ENCODE measurements at regions of chrX and their contacts with region 1.

Region 1: GRCh38 chrX:63746278-63746677 is 38.7 kb downstream of the ARHGEF9 start:
- DNase-seq: no peak
- ATAC-seq: no peak
- H3K4me3 ChIP-seq: no peak overlapping the region
- H3K27ac ChIP-seq: peak overlapping the region; percentile 3
- H3K4me1 ChIP-seq: peaks cover 15% of the 10 kb centered on the region
- H3K27me3 ChIP-seq: no peaks in the 10 kb centered on the region

Region 2: DNA sequence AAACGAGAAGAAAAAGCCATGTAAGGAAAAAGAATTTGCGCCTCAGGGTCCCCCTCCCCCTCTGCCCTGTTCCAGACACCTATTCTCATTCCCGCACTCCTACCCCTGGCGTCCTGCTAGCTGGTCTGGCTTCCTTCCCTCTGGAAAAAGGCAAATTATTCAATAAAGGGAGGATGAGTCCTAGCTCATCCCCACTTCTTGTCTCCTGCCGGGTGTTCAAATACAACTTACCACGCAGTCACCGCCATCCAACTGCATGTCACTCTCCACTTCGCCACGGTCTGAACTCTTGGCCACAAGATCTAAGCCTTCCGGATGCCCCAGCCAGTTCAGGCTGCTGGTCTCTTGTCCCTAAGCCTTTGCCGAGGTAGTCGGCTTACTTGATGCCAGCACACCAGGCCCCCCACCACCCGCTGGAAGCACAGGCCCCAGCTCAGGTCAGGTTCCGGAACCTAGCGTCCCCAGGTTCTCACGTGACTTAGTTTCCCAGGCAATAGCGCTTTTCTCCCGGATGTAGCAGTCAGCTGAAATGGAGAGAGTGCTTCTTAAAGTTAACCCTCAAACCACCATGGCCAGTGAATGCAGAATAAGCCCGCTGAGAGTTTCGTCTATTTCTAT is 185.6 kb before region 1 on chrX:
- intact Hi-C with region 1: no loop called
- DNase-seq: peak; percentile 35 to 64 (median 63)
- ATAC-seq: peak; percentile 96 to 98
- H3K4me3 ChIP-seq: peak overlapping the region; percentile 50
- H3K27ac ChIP-seq: no peak overlapping the region
- H3K4me1 ChIP-seq: no peaks in the 10 kb centered on the region
- H3K27me3 ChIP-seq: no peaks in the 10 kb centered on the region

Region 3: GRCh38 chrX:63686878-63687714 is 59.2 kb before region 1 on chrX:
- intact Hi-C with region 1: loop called in 1 of 4 experiments (anchors 10 kb)
- DNase-seq: no peak
- ATAC-seq: peak; percentile 38 to 49
- H3K4me3 ChIP-seq: no peak overlapping the region
- H3K27ac ChIP-seq: no peak overlapping the region
- H3K4me1 ChIP-seq: no peaks in the 10 kb centered on the region
- H3K27me3 ChIP-seq: no peaks in the 10 kb centered on the region

Region 4: GRCh38 chrX:63932006-63932405 is 185.7 kb after region 1 on chrX:
- intact Hi-C with region 1: no loop called
- DNase-seq: no peak
- ATAC-seq: no peak
- H3K4me3 ChIP-seq: no peak overlapping the region
- H3K27ac ChIP-seq: no peak overlapping the region
- H3K4me1 ChIP-seq: no peaks in the 10 kb centered on the region
- H3K27me3 ChIP-seq: no peaks in the 10 kb centered on the region

Measured in right cardiac atrium (tissue), 5 donors.